A673 (cell line): ENCODE measurements at regions of chr5 and their contacts with region 1.

Region 1: GRCh38 chr5:1641560-1642166 is 117.9 kb upstream of the LPCAT1 start:
- DNase-seq: peak; percentile 92
- H3K4me3 ChIP-seq: no peak overlapping the region
- H3K27ac ChIP-seq: no peak overlapping the region
- H3K4me1 ChIP-seq: peaks cover 4% of the 10 kb centered on the region
- H3K27me3 ChIP-seq: peaks cover 27% of the 10 kb centered on the region
- CTCF ChIP-seq: peak; percentile 99

Region 2: DNA sequence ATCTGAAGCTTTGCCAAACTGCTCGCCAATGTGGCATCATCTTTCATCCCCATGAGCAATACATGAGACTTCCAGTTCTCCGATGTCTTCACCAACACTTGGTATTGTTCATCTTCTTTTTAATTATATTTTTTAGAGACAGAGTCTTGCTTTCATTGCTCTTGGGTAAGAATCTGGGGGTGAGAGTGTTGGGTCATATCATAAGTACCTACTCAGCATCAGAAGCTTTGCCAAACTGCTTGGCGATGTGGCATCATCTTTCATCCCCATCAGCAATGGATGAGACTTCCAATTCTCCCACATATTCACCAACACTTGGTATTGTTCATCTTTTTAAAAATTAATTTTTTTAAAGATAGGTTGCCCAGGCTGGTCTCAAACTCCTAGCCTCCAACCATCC is 826.2 kb before region 1 on chr5:
- CTCF ChIA-PET with region 1: no interaction called
- POLR2A ChIA-PET with region 1: no interaction called
- intact Hi-C with region 1: no loop called
- DNase-seq: no peak
- H3K4me3 ChIP-seq: no peak overlapping the region
- H3K27ac ChIP-seq: no peak overlapping the region
- H3K4me1 ChIP-seq: no peaks in the 10 kb centered on the region
- H3K27me3 ChIP-seq: no peaks in the 10 kb centered on the region
- CTCF ChIP-seq: no peak

Region 3: GRCh38 chr5:923281-923873 is 718.3 kb before region 1 on chr5:
- CTCF ChIA-PET with region 1: no interaction called
- POLR2A ChIA-PET with region 1: no interaction called
- intact Hi-C with region 1: loop called (anchors 10 kb)
- DNase-seq: peak; percentile 76
- H3K4me3 ChIP-seq: no peak overlapping the region
- H3K27ac ChIP-seq: no peak overlapping the region
- H3K4me1 ChIP-seq: no peaks in the 10 kb centered on the region
- H3K27me3 ChIP-seq: peaks cover 2% of the 10 kb centered on the region
- CTCF ChIP-seq: peak; percentile 92

Region 4: DNA sequence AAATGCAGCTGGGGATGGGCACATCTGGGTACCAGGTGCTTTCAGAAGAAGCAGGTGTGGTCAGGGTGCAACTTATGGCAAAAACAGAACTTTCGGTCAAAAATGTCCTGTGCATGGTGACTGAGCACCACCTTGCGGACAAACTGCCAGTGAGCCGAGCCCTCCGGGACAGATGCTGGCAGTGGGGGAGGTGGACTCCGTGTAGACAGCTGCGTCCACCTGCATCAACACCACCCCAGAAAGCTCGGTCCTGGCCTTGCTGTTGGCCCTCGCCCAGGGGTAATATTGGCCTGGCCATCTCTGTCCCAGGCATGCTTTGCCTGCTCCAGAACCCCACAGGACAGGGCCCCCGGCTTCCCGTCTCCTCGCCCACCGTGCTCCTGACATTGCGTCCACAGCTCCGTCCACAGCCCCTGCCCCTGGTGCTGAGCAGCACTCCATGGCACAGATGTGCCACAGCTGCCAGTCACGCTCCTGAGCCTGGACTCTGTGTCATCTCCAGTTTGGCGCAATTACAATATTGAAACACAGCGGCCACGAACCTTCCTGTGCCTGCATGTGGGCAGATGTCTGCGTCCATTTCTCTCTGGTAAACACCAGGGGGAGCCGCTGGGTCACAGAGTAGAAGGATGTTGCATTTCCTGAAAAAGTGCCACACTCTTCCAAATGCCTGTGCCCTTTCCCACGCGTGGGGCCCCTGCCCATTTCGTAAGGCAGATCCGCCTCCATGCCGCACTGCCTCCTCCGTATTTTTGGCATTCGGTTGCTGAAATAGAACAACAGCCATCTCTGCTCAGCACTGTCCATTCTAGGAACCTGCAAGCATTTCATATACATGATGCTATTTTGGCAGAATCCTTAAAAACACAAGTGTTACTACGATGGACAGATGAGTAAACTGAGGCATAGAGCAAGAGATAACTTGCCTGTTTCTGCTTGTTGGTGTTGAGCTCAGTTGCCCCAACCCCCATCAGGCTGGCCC is 473.6 kb before region 1 on chr5:
- CTCF ChIA-PET with region 1: interaction called, 4 read pairs
- POLR2A ChIA-PET with region 1: no interaction called
- intact Hi-C with region 1: loop called (anchors 1 kb)
- DNase-seq: peak; percentile 80
- H3K4me3 ChIP-seq: peak overlapping the region; percentile 33
- H3K27ac ChIP-seq: no peak overlapping the region
- H3K4me1 ChIP-seq: no peaks in the 10 kb centered on the region
- H3K27me3 ChIP-seq: no peaks in the 10 kb centered on the region
- CTCF ChIP-seq: peak; percentile 65

Region 5: GRCh38 chr5:1479581-1480188 is 162.0 kb before region 1 on chr5:
- CTCF ChIA-PET with region 1: interaction called, 7 read pairs
- POLR2A ChIA-PET with region 1: no interaction called
- intact Hi-C with region 1: loop called (anchors 2 kb)
- DNase-seq: peak; percentile 69
- H3K4me3 ChIP-seq: no peak overlapping the region
- H3K27ac ChIP-seq: no peak overlapping the region
- H3K4me1 ChIP-seq: no peaks in the 10 kb centered on the region
- H3K27me3 ChIP-seq: no peaks in the 10 kb centered on the region
- CTCF ChIP-seq: peak; percentile 84

Region 6: DNA sequence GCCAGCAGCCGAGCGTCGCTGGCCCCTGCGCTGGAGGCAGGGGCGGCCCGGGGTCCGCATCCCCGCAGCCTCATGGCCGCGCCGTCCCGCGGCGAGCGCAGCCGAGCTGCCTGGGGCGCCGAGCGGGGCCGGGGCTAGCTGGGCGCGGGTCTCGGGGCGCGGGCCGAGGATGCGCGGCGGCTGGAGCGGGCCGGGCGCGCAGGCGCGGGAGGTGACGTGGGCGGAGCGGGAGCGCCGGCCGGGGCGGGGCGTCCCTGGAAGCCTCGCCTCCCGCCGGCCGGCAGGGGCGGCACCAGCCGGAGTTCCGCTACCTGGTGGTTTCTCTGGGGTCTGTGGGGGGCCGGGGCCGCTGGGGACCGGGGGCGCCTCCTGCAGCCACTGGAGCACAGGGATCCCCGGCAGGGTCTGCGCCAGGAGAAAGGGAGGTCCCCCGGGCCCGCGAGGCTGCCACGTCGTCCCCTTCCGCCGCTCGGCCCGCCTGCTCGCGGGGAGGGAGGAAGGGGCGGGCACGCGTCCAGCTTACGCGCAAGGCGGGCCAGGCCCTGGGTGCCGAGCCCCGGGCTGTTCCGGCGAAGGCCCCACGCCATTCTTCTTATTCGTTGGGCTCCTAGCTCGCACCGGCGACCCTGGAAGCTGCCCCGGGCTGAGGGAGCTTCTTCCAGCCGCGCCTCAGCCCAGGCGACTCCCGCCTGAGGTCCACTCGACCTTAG is 117.7 kb before region 1 on chr5 and contains the start of gene LPCAT1:
- CTCF ChIA-PET with region 1: interaction called, 3 read pairs
- POLR2A ChIA-PET with region 1: no interaction called
- intact Hi-C with region 1: loop called (anchors 5 kb)
- DNase-seq: peak; percentile 80
- H3K4me3 ChIP-seq: peak within 1 kb of the TSS; percentile 92
- H3K27ac ChIP-seq: peak within 1 kb of the TSS; percentile 84
- H3K4me1 ChIP-seq: peaks cover 11% of the 10 kb centered on the region
- H3K27me3 ChIP-seq: no peaks in the 10 kb centered on the region
- CTCF ChIP-seq: no peak
- total RNA-seq, gene LPCAT1: 86.9 and 97.3 TPM in 2 replicates

Region 7: GRCh38 chr5:1681952-1682351 is 40.3 kb after region 1 on chr5:
- CTCF ChIA-PET with region 1: interaction called, 10 read pairs
- POLR2A ChIA-PET with region 1: no interaction called
- intact Hi-C with region 1: no loop called
- DNase-seq: no peak
- H3K4me3 ChIP-seq: no peak overlapping the region
- H3K27ac ChIP-seq: no peak overlapping the region
- H3K4me1 ChIP-seq: no peaks in the 10 kb centered on the region
- H3K27me3 ChIP-seq: peaks cover 56% of the 10 kb centered on the region
- CTCF ChIP-seq: no peak